Calu3 (cell line): ENCODE measurements at regions of chr5 and their contacts with region 1.

Region 1: DNA sequence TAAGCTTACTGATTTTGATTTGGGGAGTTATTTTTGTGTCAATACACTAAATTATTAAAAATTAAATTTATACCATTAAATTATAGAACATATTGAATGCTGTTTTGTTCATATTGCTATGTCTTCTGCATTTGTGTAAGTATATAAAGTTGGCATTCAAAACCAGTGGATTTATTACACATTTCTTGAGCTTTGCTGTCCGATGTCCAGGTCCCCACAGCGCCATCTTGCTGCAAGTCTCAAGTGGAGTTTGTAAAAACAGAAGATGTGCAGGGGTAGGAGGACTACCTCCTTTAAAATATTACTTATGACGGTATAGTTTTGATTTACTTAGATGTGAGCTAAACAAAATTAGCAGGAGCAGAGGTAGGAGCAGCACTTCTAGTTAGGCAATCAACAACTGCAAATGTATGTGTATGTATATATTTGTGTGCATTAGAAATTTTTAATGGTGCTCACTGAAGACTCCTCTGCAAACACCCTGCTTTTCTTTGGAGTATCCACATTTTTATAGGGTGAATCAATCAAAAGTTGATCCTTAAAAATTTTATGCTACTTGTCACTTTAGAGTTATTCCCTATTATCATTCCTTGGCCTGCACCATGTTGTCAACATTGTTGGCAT is 37.4 kb downstream of the CPEB4 start:
- DNase-seq: peak; percentile 69
- H3K4me3 Mint-ChIP-seq: no peak overlapping the region
- H3K27ac Mint-ChIP-seq: no peak overlapping the region
- H3K4me1 Mint-ChIP-seq: peaks cover 37% of the 10 kb centered on the region
- H3K27me3 Mint-ChIP-seq: no peaks in the 10 kb centered on the region
- CTCF ChIP-seq: peak; percentile 61

Region 2: DNA sequence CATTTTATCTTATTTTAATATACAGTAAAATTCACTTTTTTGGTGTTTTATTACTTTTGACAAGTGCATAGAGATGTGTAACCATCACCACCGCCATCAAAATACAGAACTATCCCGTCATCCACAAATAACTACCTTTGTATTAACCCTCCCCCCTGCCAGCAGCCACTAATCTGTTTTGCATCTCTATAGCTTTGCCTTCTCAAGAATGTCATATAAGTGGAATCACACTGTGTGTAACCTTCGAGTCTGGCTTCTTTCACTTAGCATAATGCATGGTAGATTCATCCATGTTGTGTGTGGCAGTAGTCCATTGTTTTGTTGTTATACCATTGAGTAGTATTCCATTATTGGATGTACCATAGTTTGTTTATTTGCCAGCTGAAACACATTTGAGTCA is 407.9 kb before region 1 on chr5:
- CTCF ChIA-PET with region 1: no interaction called
- intact Hi-C with region 1: no loop called
- DNase-seq: no peak
- H3K4me3 Mint-ChIP-seq: no peak overlapping the region
- H3K27ac Mint-ChIP-seq: no peak overlapping the region
- H3K4me1 Mint-ChIP-seq: peaks cover 15% of the 10 kb centered on the region
- H3K27me3 Mint-ChIP-seq: no peaks in the 10 kb centered on the region
- CTCF ChIP-seq: no peak

Region 3: DNA sequence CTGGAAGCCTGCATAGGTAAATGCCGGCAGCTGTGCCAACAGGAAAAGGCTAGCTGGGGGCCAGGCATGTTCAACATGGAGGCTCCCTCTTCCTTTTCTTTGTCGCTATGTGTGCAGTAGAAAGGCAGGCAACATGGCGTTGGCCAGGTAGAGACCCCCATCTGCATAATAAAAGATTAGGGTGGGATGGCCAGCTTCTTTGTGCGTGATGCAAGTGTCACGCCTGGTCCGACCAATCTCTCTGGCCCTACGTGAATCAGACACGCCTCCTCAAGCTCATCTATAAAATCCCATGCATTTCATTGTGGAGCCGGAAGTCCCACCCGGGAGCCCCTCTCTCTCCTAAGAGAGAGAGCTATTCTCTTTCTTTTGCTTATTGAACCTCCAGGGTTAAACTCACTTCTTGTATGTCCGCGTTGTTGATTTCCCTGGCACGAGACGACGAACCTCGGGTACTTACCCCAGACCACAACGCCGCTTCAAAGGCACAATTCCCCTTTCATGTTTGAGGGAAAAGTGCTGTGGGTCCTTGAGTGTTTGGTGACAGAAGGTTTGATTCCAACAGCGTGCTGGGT is 38.4 kb after region 1 on chr5:
- CTCF ChIA-PET with region 1: interaction called, 10 read pairs
- intact Hi-C with region 1: no loop called
- DNase-seq: peak; percentile 49
- H3K4me3 Mint-ChIP-seq: peak overlapping the region; percentile 85
- H3K27ac Mint-ChIP-seq: peak overlapping the region; percentile 83
- H3K4me1 Mint-ChIP-seq: peaks cover 18% of the 10 kb centered on the region
- H3K27me3 Mint-ChIP-seq: no peaks in the 10 kb centered on the region
- CTCF ChIP-seq: no peak

Region 4: GRCh38 chr5:174030289-174030688 is 104.7 kb after region 1 on chr5:
- CTCF ChIA-PET with region 1: no interaction called
- intact Hi-C with region 1: no loop called
- DNase-seq: no peak
- H3K4me3 Mint-ChIP-seq: no peak overlapping the region
- H3K27ac Mint-ChIP-seq: no peak overlapping the region
- H3K4me1 Mint-ChIP-seq: no peaks in the 10 kb centered on the region
- H3K27me3 Mint-ChIP-seq: peaks cover 84% of the 10 kb centered on the region
- CTCF ChIP-seq: no peak